Activated naive CD4-positive, alpha-beta T cell treated with anti-CD3 and anti-CD28 coated beads, Interleukin-2, amount 10 ng/mL, durations not matched to agents 7 days and 5 days (primary cell): ENCODE measurements at regions of chr2 and their contacts with region 1.

Region 1: GRCh38 chr2:25309402-25309801 is 32.3 kb downstream of the DNMT3A start:
- DNase-seq: peak; percentile 81
- H3K4me3 Mint-ChIP-seq: no peak overlapping the region
- H3K27ac Mint-ChIP-seq: no peak overlapping the region
- H3K4me1 Mint-ChIP-seq: peaks cover 73% of the 10 kb centered on the region
- H3K27me3 Mint-ChIP-seq: no peaks in the 10 kb centered on the region

Region 2: GRCh38 chr2:24702800-24703199 is 606.6 kb before region 1 on chr2:
- CTCF ChIA-PET with region 1: no interaction called
- DNase-seq: no peak
- H3K4me3 Mint-ChIP-seq: no peak overlapping the region
- H3K27ac Mint-ChIP-seq: no peak overlapping the region
- H3K4me1 Mint-ChIP-seq: no peaks in the 10 kb centered on the region
- H3K27me3 Mint-ChIP-seq: no peaks in the 10 kb centered on the region

Region 3: GRCh38 chr2:25376750-25377621 is 67.6 kb after region 1 on chr2:
- CTCF ChIA-PET with region 1: interaction called, 17 read pairs
- DNase-seq: peak; percentile 94
- H3K4me3 Mint-ChIP-seq: peak overlapping the region; percentile 65
- H3K27ac Mint-ChIP-seq: peak overlapping the region; percentile 100
- H3K4me1 Mint-ChIP-seq: peaks cover 42% of the 10 kb centered on the region
- H3K27me3 Mint-ChIP-seq: no peaks in the 10 kb centered on the region

Region 4: GRCh38 chr2:25567406-25567805 is 258.0 kb after region 1 on chr2:
- CTCF ChIA-PET with region 1: interaction called, 13 read pairs
- DNase-seq: peak; percentile 36
- H3K4me3 Mint-ChIP-seq: no peak overlapping the region
- H3K27ac Mint-ChIP-seq: no peak overlapping the region
- H3K4me1 Mint-ChIP-seq: peaks cover 8% of the 10 kb centered on the region
- H3K27me3 Mint-ChIP-seq: no peaks in the 10 kb centered on the region

Region 5: GRCh38 chr2:25825238-25825637 is 515.8 kb after region 1 on chr2:
- CTCF ChIA-PET with region 1: no interaction called
- DNase-seq: peak; percentile 54
- H3K4me3 Mint-ChIP-seq: peak overlapping the region; percentile 0
- H3K27ac Mint-ChIP-seq: peak overlapping the region; percentile 29
- H3K4me1 Mint-ChIP-seq: peaks cover 65% of the 10 kb centered on the region
- H3K27me3 Mint-ChIP-seq: no peaks in the 10 kb centered on the region